ENCODE measurements at regions of chr16 and their contacts with region 1.

Region 1: GRCh38 chr16:85986931-85987749 is 88.2 kb downstream of the IRF8 start:
- DNase-seq: peak; percentile 43
- H3K4me3 Mint-ChIP-seq: no peak overlapping the region
- H3K27ac Mint-ChIP-seq: no peak overlapping the region
- H3K4me1 Mint-ChIP-seq: peaks cover 47% of the 10 kb centered on the region
- H3K27me3 Mint-ChIP-seq: peaks cover 16% of the 10 kb centered on the region

Region 2: DNA sequence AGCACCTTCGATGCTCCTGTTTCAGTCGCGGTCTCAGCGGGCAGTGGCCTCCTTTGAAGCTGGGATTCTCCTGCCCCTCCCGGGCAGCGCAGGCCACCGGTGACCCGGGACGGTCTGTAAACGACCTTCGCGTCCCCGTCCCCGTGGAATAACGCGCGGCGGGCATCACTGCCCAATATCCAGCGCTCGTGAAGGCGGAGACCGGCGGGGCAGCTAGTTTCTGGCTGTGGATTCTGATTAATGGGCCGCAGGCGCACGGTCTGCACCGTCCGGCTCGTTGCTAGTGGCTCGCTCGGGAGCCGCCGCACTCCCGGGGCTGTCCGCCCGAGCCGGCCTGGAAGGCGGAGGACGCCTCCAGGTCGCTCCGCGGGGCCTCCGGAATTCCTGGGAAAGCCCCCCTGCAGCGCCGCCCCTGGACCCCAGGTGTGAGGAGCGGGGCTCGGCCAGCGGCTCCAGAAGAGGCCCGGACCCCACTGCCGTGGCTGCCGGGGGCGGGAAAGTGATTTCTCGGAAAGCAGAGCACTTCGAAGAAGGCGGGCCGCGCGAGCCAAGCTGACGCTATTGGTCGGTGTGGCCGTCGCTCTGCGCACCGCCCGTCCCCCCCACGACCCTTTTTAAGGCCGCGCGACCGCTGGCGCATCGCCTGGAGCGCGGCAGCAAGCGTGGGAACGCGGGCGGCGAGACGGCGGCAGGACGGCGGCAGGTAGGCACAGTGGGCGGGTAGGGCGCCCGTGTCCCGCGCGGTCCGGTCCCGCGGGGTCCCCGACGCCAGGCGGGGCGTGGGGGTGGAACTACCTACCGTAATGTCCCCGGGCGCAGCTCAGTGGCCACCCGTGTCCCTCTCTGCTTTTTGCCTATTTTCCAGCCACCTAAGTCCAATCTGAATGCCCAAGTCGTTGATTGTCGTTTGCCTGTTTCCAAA is 88.4 kb before region 1 on chr16 and contains the start of gene IRF8:
- CTCF ChIA-PET with region 1: interaction called, 12 read pairs
- DNase-seq: peak; percentile 85
- H3K4me3 Mint-ChIP-seq: peak within 1 kb of the TSS; percentile 86
- H3K27ac Mint-ChIP-seq: peak within 1 kb of the TSS; percentile 75
- H3K4me1 Mint-ChIP-seq: peaks cover 58% of the 10 kb centered on the region
- H3K27me3 Mint-ChIP-seq: peaks cover 30% of the 10 kb centered on the region

Region 3: DNA sequence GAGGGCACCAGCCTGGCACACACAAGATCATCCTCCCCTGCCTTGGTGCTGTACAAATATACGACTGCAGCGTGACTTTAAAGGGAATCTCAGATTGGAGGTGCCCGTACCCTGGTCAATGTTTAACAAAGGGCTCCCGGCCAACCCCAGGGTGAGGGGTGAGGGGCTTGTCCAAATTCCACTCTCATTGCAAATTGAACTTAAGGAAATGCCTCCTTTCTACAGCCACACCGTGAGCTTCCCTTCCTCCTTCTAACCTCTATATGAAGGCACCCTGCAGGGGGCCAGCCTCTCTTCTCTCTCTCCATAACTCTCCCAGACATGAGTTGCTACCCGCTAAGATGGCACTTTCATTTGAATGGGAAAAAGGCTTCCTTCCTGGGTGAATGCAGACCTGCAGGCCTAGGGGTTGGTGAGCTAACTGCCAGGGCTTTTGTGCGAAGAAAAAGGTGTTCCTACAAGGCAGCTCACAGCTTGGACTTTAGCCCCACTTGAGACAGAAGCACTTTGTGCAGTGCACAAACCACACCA is 11.6 kb before region 1 on chr16:
- CTCF ChIA-PET with region 1: no interaction called
- DNase-seq: no peak
- H3K4me3 Mint-ChIP-seq: no peak overlapping the region
- H3K27ac Mint-ChIP-seq: no peak overlapping the region
- H3K4me1 Mint-ChIP-seq: no peaks in the 10 kb centered on the region
- H3K27me3 Mint-ChIP-seq: peaks cover 32% of the 10 kb centered on the region

Region 4: DNA sequence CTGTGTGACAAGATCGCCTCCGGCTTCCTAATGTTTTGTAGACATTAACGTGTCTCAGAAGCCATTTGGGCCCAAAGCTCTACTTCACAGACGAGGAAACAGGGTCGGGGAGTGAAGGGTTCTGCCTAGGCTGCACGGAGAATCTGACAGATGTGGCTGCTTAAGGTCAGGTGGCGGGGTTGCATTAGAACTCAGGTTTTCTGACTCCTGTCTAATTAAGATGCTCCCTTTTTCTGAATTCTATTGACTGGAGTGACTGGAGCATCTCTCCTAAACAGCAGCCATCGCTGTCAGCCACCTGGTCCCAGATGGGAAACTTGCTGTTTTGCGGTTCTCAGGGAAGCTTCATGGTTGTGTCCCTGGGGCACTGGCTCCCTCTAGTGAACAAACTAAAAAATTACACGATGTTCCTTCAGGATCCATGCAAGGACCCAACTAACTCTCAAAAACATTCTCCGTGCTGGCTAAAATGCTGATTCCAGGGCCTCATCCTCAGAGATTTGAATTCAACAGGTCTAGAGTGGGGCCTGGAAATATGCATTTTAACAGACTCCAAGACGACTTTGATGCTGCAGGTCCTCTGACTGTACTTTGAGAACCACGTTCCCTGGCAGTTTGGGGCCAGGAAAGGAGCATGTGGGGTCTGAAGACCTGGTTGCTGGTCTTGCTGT is 29.2 kb after region 1 on chr16:
- CTCF ChIA-PET with region 1: interaction called, 13 read pairs
- DNase-seq: peak; percentile 43
- H3K4me3 Mint-ChIP-seq: no peak overlapping the region
- H3K27ac Mint-ChIP-seq: no peak overlapping the region
- H3K4me1 Mint-ChIP-seq: no peaks in the 10 kb centered on the region
- H3K27me3 Mint-ChIP-seq: peaks cover 37% of the 10 kb centered on the region

Region 5: DNA sequence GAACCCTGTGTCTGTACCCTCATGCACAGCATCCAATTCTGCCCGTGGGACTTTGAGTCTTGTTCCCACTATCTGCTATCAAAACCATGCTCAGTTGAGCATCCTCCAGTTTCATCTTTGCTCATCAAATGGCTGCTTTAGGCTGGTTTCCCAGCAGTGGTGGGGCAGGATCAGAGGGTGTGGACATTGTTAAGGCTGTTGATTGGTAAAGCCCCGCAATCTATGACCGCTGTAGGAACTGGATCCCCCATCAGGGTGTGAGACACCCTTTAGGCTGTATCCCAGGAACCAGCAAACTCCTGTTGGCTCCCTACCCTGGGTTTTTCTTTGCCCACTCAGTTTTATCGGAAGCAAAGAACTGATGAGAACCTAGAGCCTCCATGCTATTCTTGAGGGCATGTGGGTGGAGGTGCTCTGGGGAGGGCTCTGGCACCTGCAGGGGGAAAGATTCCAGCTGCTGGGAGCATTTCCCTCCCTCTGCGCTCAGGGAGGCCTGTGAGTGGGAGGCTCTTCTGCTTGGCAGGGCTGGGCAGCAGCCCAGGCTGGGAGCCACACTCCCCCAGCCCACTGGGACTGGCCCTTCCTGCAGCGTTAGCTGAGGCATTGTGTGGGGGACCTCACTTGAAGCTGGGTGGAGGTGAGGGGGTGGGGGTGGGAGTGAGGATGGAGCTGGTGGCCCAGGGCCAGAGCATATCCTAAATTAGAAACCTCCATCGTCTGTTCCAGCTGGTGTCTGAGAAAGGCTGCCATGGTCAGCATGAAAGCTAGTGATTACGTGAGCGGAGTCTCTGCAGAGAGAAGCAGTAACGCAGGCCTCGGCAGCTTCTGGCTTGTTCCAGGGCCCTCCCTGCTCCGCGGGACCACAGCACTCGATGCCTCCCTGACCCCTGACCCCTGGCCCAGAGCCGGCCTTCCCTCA is 72.4 kb after region 1 on chr16:
- CTCF ChIA-PET with region 1: no interaction called
- DNase-seq: no peak
- H3K4me3 Mint-ChIP-seq: no peak overlapping the region
- H3K27ac Mint-ChIP-seq: no peak overlapping the region
- H3K4me1 Mint-ChIP-seq: no peaks in the 10 kb centered on the region
- H3K27me3 Mint-ChIP-seq: peaks cover 13% of the 10 kb centered on the region